ENCODE measurements at regions of chr17 and their contacts with region 1.

Region 1: GRCh38 chr17:2064980-2065785 is 10.3 kb downstream of the HIC1 start:
- DNase-seq: no peak
- H3K4me3 ChIP-seq: no peak overlapping the region
- H3K27ac ChIP-seq: no peak overlapping the region
- H3K4me1 ChIP-seq: no peaks in the 10 kb centered on the region
- H3K27me3 ChIP-seq: no peaks in the 10 kb centered on the region
- CTCF ChIP-seq: peak; percentile 11 to 39

Region 2: GRCh38 chr17:2122641-2123302 is 57.6 kb after region 1 on chr17:
- CTCF ChIA-PET with region 1: no interaction called
- dilution Hi-C with region 1: loop called (anchors 10 kb)
- in situ Hi-C with region 1: no loop called
- intact Hi-C with region 1: no loop called
- DNase-seq: peak; percentile 71
- H3K4me3 ChIP-seq: no peak overlapping the region
- H3K27ac ChIP-seq: no peak overlapping the region
- H3K4me1 ChIP-seq: peaks cover 15% of the 10 kb centered on the region
- H3K27me3 ChIP-seq: no peaks in the 10 kb centered on the region
- CTCF ChIP-seq: no peak

Region 3: DNA sequence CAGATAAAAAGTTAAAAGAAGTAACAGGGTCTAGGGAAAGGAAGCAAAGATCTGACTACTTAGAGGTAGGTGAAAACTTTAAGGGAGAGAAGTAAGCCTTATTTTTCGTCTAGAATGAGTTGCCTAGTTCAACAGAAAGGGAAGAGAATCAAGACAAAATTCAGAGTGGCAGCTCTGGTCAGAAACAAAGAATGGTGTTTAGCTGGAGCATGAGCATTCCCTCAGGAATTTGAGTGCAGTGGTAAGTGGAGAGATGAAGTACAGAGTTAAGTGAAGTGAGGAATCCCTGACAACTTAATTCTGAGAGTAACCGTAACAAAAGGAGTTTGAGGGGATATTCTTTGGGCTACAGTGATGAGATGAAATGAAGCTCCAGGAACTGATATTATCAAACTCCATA is 226.9 kb after region 1 on chr17:
- CTCF ChIA-PET with region 1: no interaction called
- dilution Hi-C with region 1: loop called (anchors 5 kb)
- in situ Hi-C with region 1: no loop called
- intact Hi-C with region 1: no loop called
- DNase-seq: peak; percentile 7
- H3K4me3 ChIP-seq: no peak overlapping the region
- H3K27ac ChIP-seq: no peak overlapping the region
- H3K4me1 ChIP-seq: peaks cover 12% of the 10 kb centered on the region
- H3K27me3 ChIP-seq: no peaks in the 10 kb centered on the region
- CTCF ChIP-seq: no peak

Region 4: DNA sequence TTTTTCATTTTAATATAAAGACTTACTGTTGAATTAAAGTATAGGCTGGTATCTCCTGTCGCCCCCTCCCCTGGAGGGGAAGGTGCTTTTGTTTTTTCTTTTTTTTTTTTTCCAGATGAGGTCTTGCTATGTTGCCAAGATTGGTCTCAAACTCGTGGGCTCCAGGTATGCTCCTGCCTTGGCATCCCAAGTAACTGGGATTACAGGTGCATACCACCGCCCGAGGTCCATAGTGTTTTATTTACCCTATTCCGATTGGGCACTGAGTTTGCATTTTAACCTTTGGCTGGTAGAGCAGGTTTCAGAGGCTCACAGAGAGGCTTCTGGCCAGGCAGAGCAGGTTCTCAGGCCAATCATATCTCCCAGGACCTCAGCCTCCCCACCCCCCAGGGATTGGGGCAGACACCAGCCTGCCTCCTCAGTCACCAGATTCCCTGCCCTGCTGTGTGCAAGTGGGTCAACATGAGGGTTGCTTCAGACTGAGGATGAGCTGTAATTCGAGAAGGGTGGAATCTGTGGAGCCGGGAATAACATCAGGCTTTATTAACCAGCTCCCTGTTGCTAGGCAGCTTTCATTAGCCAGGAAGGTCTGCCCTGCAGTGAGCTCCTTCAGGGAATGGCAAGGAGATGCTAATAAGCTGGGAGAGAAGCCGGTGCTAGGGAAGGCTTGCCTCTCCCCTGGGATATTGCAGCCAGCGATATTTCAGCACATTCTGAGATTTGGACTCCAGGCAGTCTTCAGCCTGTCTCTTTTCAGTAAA is 282.5 kb after region 1 on chr17:
- CTCF ChIA-PET with region 1: no interaction called
- dilution Hi-C with region 1: loop called (anchors 10 kb)
- in situ Hi-C with region 1: no loop called
- intact Hi-C with region 1: no loop called
- DNase-seq: peak; percentile 42
- H3K4me3 ChIP-seq: no peak overlapping the region
- H3K27ac ChIP-seq: no peak overlapping the region
- H3K4me1 ChIP-seq: peaks cover 4% of the 10 kb centered on the region
- H3K27me3 ChIP-seq: no peaks in the 10 kb centered on the region
- CTCF ChIP-seq: no peak